CD8-positive, alpha-beta T cell (primary cell): ENCODE measurements at regions of chr7 and their contacts with region 1.

Region 1: GRCh38 chr7:158856883-158857668 is 718 bp downstream of the DYNC2I1 start:
- DNase-seq: no peak
- ATAC-seq: no peak
- H3K4me3 ChIP-seq: peak overlapping the region; percentile 61 to 64
- H3K4me3 Mint-ChIP-seq: peak overlapping the region; percentile 96
- H3K27ac ChIP-seq: peak overlapping the region; percentile 17 to 68
- H3K27ac Mint-ChIP-seq: peak overlapping the region; percentile 80
- H3K4me1 ChIP-seq: peaks cover 10% of the 10 kb centered on the region
- H3K4me1 Mint-ChIP-seq: peaks cover 31% of the 10 kb centered on the region
- H3K27me3 ChIP-seq: no peaks in the 10 kb centered on the region
- H3K27me3 Mint-ChIP-seq: no peaks in the 10 kb centered on the region
- CTCF ChIP-seq: no peak

Region 2: GRCh38 chr7:158782761-158783401 is 74.2 kb before region 1 on chr7:
- CTCF ChIA-PET with region 1: interaction called, 3 read pairs
- POLR2A ChIA-PET with region 1: no interaction called
- intact Hi-C with region 1: loop called in 1 of 2 experiments (anchors 5 kb)
- DNase-seq: peak in 3 of 9 experiments; percentile 28 to 57 (median 40)
- ATAC-seq: peak; percentile 36
- H3K4me3 ChIP-seq: no peak overlapping the region
- H3K4me3 Mint-ChIP-seq: no peak overlapping the region
- H3K27ac ChIP-seq: peak overlapping the region in 1 of 2 experiments; percentile 26
- H3K27ac Mint-ChIP-seq: no peak overlapping the region
- H3K4me1 ChIP-seq: peaks cover 31% of the 10 kb centered on the region
- H3K4me1 Mint-ChIP-seq: no peaks in the 10 kb centered on the region
- H3K27me3 ChIP-seq: no peaks in the 10 kb centered on the region
- H3K27me3 Mint-ChIP-seq: no peaks in the 10 kb centered on the region
- CTCF ChIP-seq: no peak

Region 3: DNA sequence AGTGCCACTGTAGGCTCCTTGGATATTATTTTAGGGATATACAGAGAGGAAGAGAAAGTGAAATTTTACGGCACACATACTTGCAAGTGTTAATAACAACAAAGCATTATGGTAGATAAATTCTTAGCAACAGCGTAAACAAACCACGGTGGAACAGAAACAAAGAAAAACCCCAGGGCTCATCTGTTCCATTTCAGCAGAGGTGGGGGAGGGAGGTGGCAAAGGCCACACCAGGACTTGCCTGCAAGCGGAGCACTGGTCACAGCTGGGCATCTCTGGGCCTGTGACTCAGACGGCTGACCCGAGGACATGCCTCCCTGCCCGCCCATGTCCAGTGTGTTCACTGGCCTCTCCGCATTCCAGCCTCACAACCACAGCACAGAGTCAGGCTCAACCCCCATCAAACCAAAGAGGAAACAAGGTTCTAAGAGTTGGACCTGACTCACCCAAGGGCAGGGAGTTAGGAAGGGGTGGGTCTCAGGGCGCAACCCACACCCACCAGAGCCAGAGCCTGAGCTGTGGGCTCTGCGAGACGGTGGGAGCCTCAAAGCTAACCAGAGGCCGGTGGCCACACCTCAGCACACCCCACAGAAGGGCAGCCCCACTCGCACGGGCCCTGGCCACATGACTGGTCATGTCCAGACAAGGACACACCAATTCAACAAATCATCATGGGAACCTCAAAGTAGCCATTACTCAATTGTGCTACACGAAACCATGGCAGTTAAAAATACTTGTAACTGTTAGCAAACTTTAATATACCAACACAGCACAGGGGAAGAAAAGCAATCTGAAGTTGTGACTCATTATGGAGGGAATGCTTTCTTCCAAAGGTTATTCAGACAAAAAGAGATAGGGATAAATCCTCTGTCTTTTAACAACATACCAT is 38.5 kb before region 1 on chr7:
- CTCF ChIA-PET with region 1: interaction called, 3 read pairs
- POLR2A ChIA-PET with region 1: no interaction called
- intact Hi-C with region 1: loop called (anchors 1 to 5 kb)
- DNase-seq: peak; percentile 49 to 94 (median 67)
- ATAC-seq: peak; percentile 65
- H3K4me3 ChIP-seq: peak overlapping the region; percentile 41 to 47
- H3K4me3 Mint-ChIP-seq: peak overlapping the region; percentile 85
- H3K27ac ChIP-seq: peak overlapping the region; percentile 78 to 92
- H3K27ac Mint-ChIP-seq: peak overlapping the region; percentile 97
- H3K4me1 ChIP-seq: peaks cover 96% of the 10 kb centered on the region
- H3K4me1 Mint-ChIP-seq: peaks cover 89% of the 10 kb centered on the region
- H3K27me3 ChIP-seq: no peaks in the 10 kb centered on the region
- H3K27me3 Mint-ChIP-seq: no peaks in the 10 kb centered on the region
- CTCF ChIP-seq: no peak

Region 4: DNA sequence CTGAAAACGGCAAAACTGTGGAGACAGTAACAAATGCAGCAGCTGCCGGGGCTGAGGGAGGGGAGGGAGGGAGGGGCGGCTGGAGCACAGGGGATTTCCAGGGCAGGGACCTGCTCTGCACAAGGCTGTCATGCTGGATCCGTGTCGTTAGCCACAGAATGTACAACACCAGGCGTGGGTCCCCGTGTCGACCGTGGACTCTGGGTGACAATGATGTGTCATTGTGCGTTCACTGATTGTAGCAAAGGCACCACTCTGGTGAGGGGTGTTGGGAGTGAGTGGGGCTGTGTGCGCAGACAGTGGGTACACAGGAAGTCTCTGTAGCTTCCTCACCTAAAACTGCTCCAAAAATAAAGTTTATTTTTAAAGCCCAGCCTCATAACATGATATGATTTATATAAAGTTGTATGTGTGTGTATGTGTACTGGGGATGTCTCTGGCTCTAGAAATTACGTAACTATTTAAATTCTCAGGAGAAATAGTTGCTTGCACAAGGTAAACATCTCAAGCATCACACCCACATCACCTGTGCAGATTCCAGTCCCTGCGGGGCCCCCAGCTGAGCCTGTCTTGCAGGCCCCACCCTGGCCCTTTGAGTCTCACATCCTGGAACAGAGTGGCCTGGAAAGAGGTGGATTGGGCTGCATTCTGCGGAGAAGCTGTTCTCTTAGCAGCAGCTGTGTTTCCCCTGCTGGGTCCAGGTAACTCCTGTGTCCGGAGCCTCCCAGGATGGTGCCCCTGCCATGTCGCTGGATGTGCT is 134.9 kb after region 1 on chr7:
- CTCF ChIA-PET with region 1: no interaction called
- POLR2A ChIA-PET with region 1: no interaction called
- intact Hi-C with region 1: no loop called
- DNase-seq: peak in 4 of 9 experiments; percentile 21 to 64 (median 42)
- ATAC-seq: peak; percentile 90
- H3K4me3 ChIP-seq: no peak overlapping the region
- H3K4me3 Mint-ChIP-seq: no peak overlapping the region
- H3K27ac ChIP-seq: no peak overlapping the region
- H3K27ac Mint-ChIP-seq: no peak overlapping the region
- H3K4me1 ChIP-seq: no peaks in the 10 kb centered on the region
- H3K4me1 Mint-ChIP-seq: peaks cover 17% of the 10 kb centered on the region
- H3K27me3 ChIP-seq: peaks cover 3 to 4% of the 10 kb centered on the region in 2 experiments
- H3K27me3 Mint-ChIP-seq: peaks cover 37% of the 10 kb centered on the region
- CTCF ChIP-seq: no peak